ENCODE measurements at regions of chr12 and their contacts with region 1.

Region 1: DNA sequence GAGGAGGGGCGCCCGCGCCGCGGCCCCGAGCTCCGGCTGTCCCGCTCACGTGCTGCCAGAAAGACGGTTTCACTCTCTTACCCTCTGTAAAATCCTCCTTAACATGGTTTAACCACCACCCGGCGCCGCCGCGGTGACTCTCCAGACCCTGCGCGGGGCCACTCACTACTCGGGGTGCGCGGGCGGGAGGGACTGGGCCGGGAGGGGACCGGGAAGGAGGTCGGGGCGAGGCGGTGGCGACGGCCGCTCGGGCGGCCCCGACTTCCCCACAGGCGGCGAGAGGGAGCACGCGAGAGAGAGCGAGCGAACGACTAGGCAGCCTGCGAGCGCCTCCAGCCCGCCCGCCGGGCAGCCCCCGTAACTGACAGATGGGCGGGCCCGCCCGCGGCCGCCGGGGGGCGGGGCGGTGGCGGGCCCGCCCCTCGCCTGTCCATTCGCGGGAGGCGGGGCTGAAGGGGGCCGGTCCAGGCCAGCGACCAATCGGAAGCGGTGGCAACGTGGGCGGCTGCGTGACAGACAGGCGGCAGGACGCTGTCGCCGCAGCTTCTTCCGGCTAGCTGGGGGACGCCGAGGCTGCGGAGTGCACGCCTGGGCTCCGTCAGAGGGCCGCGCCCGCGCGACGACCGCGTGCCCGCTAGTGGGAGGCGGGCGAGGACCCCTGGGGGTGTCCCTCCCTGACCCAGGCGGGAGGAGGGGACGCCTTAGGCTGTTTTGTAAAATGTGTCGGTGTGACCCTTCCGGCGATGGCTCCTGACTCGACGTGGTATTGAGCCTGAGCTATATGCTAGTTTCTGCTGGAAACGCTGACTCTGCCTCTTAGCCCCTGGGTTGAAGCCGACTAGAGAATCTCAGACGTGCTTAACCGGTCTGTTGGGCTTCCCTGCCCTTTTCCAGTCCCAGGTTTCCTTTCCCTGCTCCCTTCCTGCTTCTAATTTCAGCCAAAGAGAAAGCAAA is at the start of gene EEA1:
- DNase-seq: peak; percentile 98
- H3K4me3 Mint-ChIP-seq: peak within 1 kb of the TSS; percentile 89
- H3K27ac Mint-ChIP-seq: peak within 1 kb of the TSS; percentile 96
- H3K4me1 Mint-ChIP-seq: peaks cover 27% of the 10 kb centered on the region
- H3K27me3 Mint-ChIP-seq: peaks cover 6% of the 10 kb centered on the region
- total RNA-seq, gene EEA1: 22.2 and 23.4 TPM in 2 replicates

Region 2: DNA sequence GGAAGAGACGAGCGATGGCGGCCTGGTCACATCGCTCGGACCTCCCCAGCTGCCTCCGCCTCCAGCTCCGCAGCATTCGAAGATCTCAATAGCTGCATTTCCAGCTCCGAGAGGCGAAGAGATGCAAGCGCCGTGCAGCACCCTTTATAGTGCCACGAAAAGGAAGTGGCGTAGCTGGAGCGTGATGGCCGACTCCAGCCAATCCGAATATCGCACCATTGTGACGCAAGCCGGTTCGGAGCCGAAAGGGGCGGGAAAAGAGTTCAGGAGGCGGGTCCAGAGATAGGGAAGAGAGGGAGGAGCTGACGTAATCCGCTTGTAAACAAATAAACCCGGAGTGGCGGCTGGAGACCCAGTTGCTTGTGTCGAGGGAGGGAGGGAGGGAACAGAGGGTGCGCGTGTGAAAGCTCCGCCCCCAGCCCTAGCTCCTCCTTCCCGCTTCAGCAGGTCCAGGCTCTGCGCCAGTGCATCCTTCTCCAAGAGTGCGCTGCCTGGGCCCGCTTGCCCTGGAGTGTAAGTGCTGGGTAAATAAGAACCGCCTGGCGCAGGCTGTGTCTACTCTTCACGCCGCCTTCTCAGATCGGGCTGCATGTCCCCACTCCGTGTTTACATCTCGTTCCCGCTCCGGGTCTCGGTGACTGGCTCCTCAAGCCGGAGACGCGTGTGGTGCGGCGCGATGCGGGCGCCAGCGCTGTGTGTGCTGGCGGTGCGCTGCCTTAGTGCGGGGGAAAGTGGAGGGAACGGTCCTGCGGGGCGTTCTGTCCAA is 783.3 kb before region 1 on chr12 and contains the start of gene BTG1:
- intact Hi-C with region 1: loop called (anchors 5 kb)
- DNase-seq: peak; percentile 100
- H3K4me3 Mint-ChIP-seq: peak within 1 kb of the TSS; percentile 99
- H3K27ac Mint-ChIP-seq: peak within 1 kb of the TSS; percentile 99
- H3K4me1 Mint-ChIP-seq: peaks cover 28% of the 10 kb centered on the region
- H3K27me3 Mint-ChIP-seq: no peaks in the 10 kb centered on the region
- total RNA-seq, gene BTG1: 84.2 and 90.8 TPM in 2 replicates

Region 3: GRCh38 chr12:92827836-92828431 is 101.3 kb before region 1 on chr12:
- intact Hi-C with region 1: loop called (anchors 5 kb)
- DNase-seq: peak; percentile 80
- H3K4me3 Mint-ChIP-seq: no peak overlapping the region
- H3K27ac Mint-ChIP-seq: no peak overlapping the region
- H3K4me1 Mint-ChIP-seq: no peaks in the 10 kb centered on the region
- H3K27me3 Mint-ChIP-seq: no peaks in the 10 kb centered on the region

Region 4: DNA sequence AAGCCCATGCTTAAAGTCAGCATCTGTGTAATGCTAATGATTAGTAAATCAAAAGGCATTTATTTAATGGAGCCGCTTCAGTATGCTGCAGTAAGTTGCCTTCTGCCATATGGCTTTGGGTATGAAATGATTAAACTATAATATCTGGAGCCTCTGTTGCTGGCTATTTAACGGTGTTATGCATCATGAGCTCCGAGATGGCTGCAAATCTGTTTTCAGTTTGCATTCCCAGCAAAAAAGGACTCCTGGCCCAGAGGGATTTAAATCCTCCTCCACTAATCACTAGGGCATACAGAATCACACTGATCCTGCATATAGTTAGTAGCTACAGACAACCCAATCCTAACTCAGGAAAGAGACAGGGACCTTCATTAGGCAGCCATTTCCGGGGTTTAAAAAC is 171.4 kb after region 1 on chr12:
- intact Hi-C with region 1: no loop called
- DNase-seq: no peak
- H3K4me3 Mint-ChIP-seq: no peak overlapping the region
- H3K27ac Mint-ChIP-seq: no peak overlapping the region
- H3K4me1 Mint-ChIP-seq: peaks cover 4% of the 10 kb centered on the region
- H3K27me3 Mint-ChIP-seq: no peaks in the 10 kb centered on the region

Region 5: GRCh38 chr12:93243689-93244513 is 314.7 kb after region 1 on chr12:
- intact Hi-C with region 1: loop called (anchors 1 kb)
- DNase-seq: peak; percentile 74
- H3K4me3 Mint-ChIP-seq: peak overlapping the region; percentile 78
- H3K27ac Mint-ChIP-seq: peak overlapping the region; percentile 77
- H3K4me1 Mint-ChIP-seq: peaks cover 34% of the 10 kb centered on the region
- H3K27me3 Mint-ChIP-seq: no peaks in the 10 kb centered on the region

Region 6: GRCh38 chr12:93569656-93570551 is 640.7 kb after region 1 on chr12:
- intact Hi-C with region 1: loop called (anchors 5 kb)
- DNase-seq: peak; percentile 92
- H3K4me3 Mint-ChIP-seq: peak overlapping the region; percentile 80
- H3K27ac Mint-ChIP-seq: peak overlapping the region; percentile 86
- H3K4me1 Mint-ChIP-seq: peaks cover 30% of the 10 kb centered on the region
- H3K27me3 Mint-ChIP-seq: peaks cover 14% of the 10 kb centered on the region

Region 7: DNA sequence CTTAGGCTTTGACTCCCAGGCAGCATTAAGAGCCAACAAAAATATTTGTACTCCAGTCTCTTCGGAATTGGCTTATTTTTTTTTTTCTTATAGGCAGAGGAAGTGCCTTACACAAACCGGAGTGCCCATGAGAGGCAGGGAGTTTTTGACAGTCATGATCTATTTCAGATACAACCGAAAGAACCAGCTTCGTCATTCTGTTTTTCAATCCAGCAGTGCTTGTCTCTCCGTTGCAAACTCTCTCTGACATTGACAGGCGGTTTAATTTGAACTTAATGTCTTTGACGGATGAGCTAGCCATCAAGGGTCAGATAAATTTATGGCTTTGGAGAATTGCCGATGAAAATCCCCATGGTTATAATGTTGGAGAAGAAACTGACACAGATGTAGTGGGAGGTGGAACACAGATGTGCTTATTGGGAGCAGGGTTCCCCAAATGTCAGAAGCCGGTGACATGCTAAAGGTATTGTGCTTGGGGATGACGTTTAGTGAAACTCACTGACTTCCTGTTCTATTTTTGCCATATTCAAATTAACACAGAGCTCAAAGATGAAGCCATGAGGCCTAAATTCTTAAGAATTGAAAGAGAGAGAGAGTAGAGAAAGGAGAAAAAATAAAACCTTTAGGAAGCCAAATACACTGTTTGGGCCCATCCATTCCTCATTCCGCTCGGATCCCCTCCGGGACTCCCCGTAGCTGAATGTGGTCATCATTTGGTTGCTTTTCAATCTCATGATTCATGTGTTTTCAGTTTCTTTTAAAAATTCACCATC is 1278.8 kb after region 1 on chr12:
- intact Hi-C with region 1: loop called (anchors 5 kb)
- DNase-seq: peak; percentile 84
- H3K4me3 Mint-ChIP-seq: peak overlapping the region; percentile 84
- H3K27ac Mint-ChIP-seq: peak overlapping the region; percentile 95
- H3K4me1 Mint-ChIP-seq: peaks cover 59% of the 10 kb centered on the region
- H3K27me3 Mint-ChIP-seq: no peaks in the 10 kb centered on the region